PC-3 (cell line): ENCODE measurements at regions of chr1 and their contacts with region 1.

Region 1: GRCh38 chr1:240107058-240107684 is 15.5 kb downstream of the FMN2 start:
- DNase-seq: peak; percentile 74
- ATAC-seq: peak; percentile 64
- H3K4me3 ChIP-seq: no peak overlapping the region
- H3K27ac ChIP-seq: no peak overlapping the region
- H3K4me1 ChIP-seq: peaks cover 38% of the 10 kb centered on the region
- H3K27me3 ChIP-seq: no peaks in the 10 kb centered on the region
- CTCF ChIP-seq: no peak

Region 2: GRCh38 chr1:239976130-239976968 is 130.8 kb before region 1 on chr1:
- CTCF ChIA-PET with region 1: no interaction called
- POLR2A ChIA-PET with region 1: no interaction called
- intact Hi-C with region 1: no loop called
- DNase-seq: peak; percentile 86
- ATAC-seq: peak; percentile 84
- H3K4me3 ChIP-seq: no peak overlapping the region
- H3K27ac ChIP-seq: no peak overlapping the region
- H3K4me1 ChIP-seq: peaks cover 6% of the 10 kb centered on the region; the same call in 1 of the 2 replicates
- H3K27me3 ChIP-seq: peaks cover under 1% of the 10 kb centered on the region; the same call in 1 of the 2 replicates
- CTCF ChIP-seq: peak; percentile 99

Region 3: GRCh38 chr1:240149484-240150094 is 42.4 kb after region 1 on chr1:
- CTCF ChIA-PET with region 1: interaction called, 7 read pairs
- POLR2A ChIA-PET with region 1: no interaction called
- intact Hi-C with region 1: loop called (anchors 2 kb)
- DNase-seq: peak; percentile 82
- ATAC-seq: peak; percentile 75
- H3K4me3 ChIP-seq: no peak overlapping the region
- H3K27ac ChIP-seq: no peak overlapping the region
- H3K4me1 ChIP-seq: peaks cover 9% of the 10 kb centered on the region
- H3K27me3 ChIP-seq: no peaks in the 10 kb centered on the region
- CTCF ChIP-seq: peak; percentile 91